ENCODE measurements at regions of chr7 and their contacts with region 1.

Region 1: DNA sequence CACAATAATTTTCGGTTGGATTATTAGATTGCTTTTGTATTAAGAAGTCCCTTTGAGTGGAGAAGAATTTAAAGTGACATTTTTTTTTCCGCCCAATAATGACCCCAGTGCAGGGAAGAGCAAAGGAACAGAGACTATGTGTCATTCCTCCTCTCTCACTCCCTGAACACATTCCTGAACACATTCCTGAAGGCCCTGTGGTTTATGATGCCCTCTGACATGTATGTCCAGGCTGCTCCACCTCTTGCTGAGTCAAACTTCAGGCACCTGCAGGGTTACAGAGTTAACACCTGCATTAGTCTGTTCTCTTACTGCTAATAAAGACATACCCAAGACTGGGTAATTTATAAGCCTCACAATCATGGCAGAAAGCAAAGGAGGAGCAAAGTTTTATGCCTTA is 704.0 kb upstream of the LRRN3 start:
- DNase-seq: peak; percentile 65 to 81
- H3K4me3 ChIP-seq: no peak overlapping the region
- H3K4me3 Mint-ChIP-seq: no peak overlapping the region
- H3K27ac Mint-ChIP-seq: peak overlapping the region; percentile 74
- H3K4me1 ChIP-seq: peaks cover 21% of the 10 kb centered on the region
- H3K4me1 Mint-ChIP-seq: peaks cover 44% of the 10 kb centered on the region
- H3K27me3 ChIP-seq: no peaks in the 10 kb centered on the region
- H3K27me3 Mint-ChIP-seq: no peaks in the 10 kb centered on the region
- CTCF ChIP-seq: no peak

Region 2: DNA sequence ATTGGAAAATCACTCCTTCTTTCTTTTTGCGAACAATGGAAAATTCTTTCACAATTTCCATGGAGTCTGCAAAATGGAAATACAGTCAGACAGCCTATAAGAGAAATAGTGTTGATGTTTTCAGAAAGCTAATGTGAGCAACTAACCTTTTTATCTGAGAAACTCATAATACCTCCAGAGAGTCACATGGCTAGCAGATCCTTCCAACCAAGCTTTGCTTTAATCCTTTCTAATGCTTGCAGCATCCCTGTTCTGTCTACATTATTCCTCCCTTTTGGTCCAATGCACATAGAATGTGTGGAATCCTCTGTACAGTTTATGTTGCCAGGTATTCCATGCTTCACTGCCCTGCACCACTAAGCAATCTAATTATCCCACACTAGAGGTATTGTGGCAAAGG is 13.5 kb before region 1 on chr7:
- CTCF ChIA-PET with region 1: no interaction called
- POLR2A ChIA-PET with region 1: no interaction called
- intact Hi-C with region 1: loop called (anchors 1 kb)
- DNase-seq: no peak
- H3K4me3 ChIP-seq: no peak overlapping the region
- H3K4me3 Mint-ChIP-seq: no peak overlapping the region
- H3K27ac Mint-ChIP-seq: peak overlapping the region; percentile 70
- H3K4me1 ChIP-seq: peaks cover 17% of the 10 kb centered on the region
- H3K4me1 Mint-ChIP-seq: peaks cover 18% of the 10 kb centered on the region
- H3K27me3 ChIP-seq: no peaks in the 10 kb centered on the region
- H3K27me3 Mint-ChIP-seq: no peaks in the 10 kb centered on the region
- CTCF ChIP-seq: no peak

Region 3: DNA sequence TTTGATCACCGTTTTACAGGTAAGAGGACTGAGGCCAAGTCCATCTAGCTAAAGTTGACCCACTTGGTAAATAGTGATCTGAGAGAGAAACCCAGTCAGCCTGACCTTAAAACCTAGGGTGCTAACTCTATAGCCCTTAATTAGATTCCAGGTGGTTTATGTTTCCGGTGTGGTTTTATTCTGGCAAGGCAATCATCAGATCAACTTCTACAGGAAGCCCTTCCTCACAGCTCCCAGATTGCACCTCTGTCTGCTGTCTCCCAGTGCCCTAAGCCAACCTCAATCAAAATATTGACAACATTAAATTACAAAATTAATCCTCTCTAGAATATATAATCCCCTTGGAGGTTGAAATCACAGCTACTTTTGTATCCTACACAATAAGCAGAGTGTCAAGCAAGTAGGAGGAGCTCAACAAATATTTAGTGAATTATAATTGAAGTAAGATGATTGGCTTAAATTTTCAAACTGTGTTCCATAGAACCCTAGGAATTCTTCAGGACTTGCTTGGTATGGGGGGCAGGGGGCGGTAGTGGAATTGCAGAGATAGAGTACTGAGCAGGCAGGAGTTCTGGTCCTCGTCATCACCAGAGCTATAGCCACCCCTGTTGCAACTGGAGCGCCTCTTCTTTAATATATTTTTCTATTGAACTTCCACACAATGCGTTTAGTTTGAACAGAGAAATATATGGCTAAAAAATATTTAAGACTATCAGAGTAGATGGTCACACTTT is 11.2 kb after region 1 on chr7:
- CTCF ChIA-PET with region 1: no interaction called
- POLR2A ChIA-PET with region 1: no interaction called
- intact Hi-C with region 1: loop called (anchors 1 kb)
- DNase-seq: no peak
- H3K4me3 ChIP-seq: no peak overlapping the region
- H3K4me3 Mint-ChIP-seq: no peak overlapping the region
- H3K27ac Mint-ChIP-seq: no peak overlapping the region
- H3K4me1 ChIP-seq: no peaks in the 10 kb centered on the region
- H3K4me1 Mint-ChIP-seq: no peaks in the 10 kb centered on the region
- H3K27me3 ChIP-seq: no peaks in the 10 kb centered on the region
- H3K27me3 Mint-ChIP-seq: no peaks in the 10 kb centered on the region
- CTCF ChIP-seq: no peak

Measured in Caco-2 (cell line).